ENCODE measurements at regions of chr9 and their contacts with region 1.

Region 1: GRCh38 chr9:17613763-17614162 is 34.9 kb downstream of the SH3GL2 start:
- DNase-seq: peak; percentile 88
- H3K4me3 ChIP-seq: no peak overlapping the region
- CTCF ChIP-seq: no peak

Region 2: DNA sequence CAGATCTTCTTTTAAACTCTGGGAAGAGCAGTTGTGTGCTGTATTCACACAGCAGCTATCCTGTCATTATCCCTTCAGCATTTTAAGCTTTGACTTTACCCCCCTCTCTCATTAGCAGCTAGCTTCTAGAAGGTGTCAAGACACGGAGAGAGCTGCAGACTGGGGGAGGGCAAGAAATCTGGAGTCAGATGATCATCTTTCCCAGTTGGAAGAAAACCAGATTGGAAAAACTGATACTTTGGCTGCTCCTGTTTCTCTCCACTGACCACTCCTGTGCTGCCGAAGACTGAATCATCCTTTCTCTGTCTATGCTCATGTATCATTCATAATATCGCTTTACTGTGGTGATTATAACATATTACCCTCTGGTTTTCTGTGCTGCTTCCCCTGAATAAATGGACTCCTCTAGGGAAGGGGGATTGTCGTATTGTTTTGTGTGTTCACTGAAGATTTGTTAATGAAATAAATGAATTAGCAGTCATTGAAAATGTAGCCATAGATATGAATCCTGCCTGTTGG is 40.2 kb after region 1 on chr9:
- in situ Hi-C with region 1: loop called (anchors 5 kb)
- DNase-seq: no peak
- H3K4me3 ChIP-seq: no peak overlapping the region
- CTCF ChIP-seq: no peak

Measured in astrocyte of the cerebellum (primary cell).